ENCODE measurements at regions of chr11 and their contacts with region 1.

Region 1: GRCh38 chr11:66371627-66372415 is at the start of gene SLC29A2:
- DNase-seq: peak; percentile 72 to 78 (median 72)
- H3K4me3 ChIP-seq: peak within 1 kb of the TSS; percentile 49 to 71
- H3K4me3 Mint-ChIP-seq: peak within 1 kb of the TSS; percentile 88 to 95 (median 92)
- H3K27ac ChIP-seq: peak within 1 kb of the TSS; percentile 61
- H3K27ac Mint-ChIP-seq: peak within 1 kb of the TSS; percentile 83 to 95 (median 94)
- H3K4me1 ChIP-seq: peaks cover 12% of the 10 kb centered on the region
- H3K4me1 Mint-ChIP-seq: peaks cover 5 to 17% (median 12%) of the 10 kb centered on the region in 4 donors
- H3K27me3 ChIP-seq: no peaks in the 10 kb centered on the region
- H3K27me3 Mint-ChIP-seq: no peaks in the 10 kb centered on the region
- total RNA-seq, gene SLC29A2: 15.0 to 15.5 TPM

Region 2: DNA sequence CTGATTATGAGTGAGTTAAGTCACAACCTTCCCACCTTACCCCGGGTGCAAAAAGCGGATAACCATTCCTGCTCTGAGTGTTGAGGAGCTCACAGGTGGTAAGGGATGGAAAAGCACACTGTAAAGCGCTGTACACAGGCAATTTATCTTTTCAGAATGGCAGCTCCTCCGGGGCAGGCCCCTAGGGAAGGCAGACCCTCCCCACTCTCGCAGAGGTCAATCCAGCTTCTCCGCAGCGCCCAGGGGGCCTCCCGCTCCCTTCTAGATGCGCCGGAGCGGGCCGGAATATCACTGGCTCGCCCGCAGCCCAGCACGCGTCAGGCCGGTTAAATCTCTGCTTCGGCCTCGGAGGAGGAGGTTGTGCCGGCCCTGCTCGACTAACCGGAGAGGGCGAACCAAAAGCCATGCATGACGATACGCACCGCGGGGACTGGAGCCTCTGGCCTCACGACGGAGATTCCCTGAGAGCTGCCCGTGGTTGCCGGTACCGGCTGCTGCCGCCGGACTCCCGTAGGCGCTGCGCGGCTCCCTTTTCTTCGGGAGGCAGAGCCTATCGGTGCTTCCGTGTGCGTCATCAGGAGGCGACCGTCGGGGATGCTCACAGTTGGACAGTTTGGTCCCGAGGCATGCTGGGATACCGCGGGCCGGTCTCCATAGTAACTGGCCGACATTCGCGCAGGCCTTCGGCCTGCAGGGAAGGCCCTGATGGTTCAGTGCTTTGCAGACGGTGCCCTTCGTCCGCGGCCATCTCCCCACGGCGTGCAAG is 27.1 kb before region 1 on chr11 and contains the start of gene BRMS1:
- CTCF ChIA-PET with region 1: interaction called, 3 read pairs
- POLR2A ChIA-PET with region 1: interaction called, 31 read pairs
- intact Hi-C with region 1: loop called (anchors 1 kb)
- DNase-seq: peak; percentile 92 to 99 (median 93)
- H3K4me3 ChIP-seq: peak within 1 kb of the TSS; percentile 79 to 99
- H3K4me3 Mint-ChIP-seq: peak within 1 kb of the TSS; percentile 90 to 99 (median 97)
- H3K27ac ChIP-seq: peak within 1 kb of the TSS; percentile 84
- H3K27ac Mint-ChIP-seq: peak within 1 kb of the TSS; percentile 95 to 99 (median 98)
- H3K4me1 ChIP-seq: peaks cover 45% of the 10 kb centered on the region
- H3K4me1 Mint-ChIP-seq: peaks cover 31 to 62% (median 41%) of the 10 kb centered on the region in 4 donors
- H3K27me3 ChIP-seq: no peaks in the 10 kb centered on the region
- H3K27me3 Mint-ChIP-seq: peaks cover 1 to 4% of the 10 kb centered on the region in 2 donors
- total RNA-seq, gene BRMS1: 49.8 to 50.8 TPM

Region 3: DNA sequence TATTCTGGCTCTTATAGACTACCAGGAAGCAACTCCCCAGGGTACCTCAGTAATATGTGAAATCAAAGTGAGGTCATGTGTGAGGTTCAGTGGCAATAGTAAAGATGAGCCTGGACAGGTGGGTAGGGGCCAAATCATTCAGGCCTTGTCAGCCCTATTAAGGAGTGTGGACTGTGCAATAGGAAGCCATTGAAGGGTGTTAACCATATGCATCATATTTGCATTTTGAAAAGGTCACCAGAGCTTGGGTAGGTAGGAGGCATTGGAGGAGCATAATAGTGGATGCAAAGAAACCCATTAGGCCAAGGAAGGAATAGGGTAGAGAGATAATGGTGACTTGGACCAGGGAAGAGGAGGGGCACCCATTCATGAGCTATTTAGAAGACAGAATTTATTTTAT is 75.2 kb after region 1 on chr11:
- CTCF ChIA-PET with region 1: no interaction called
- POLR2A ChIA-PET with region 1: no interaction called
- intact Hi-C with region 1: no loop called
- DNase-seq: no peak
- H3K4me3 ChIP-seq: no peak overlapping the region
- H3K4me3 Mint-ChIP-seq: no peak overlapping the region
- H3K27ac ChIP-seq: no peak overlapping the region
- H3K27ac Mint-ChIP-seq: no peak overlapping the region
- H3K4me1 ChIP-seq: no peaks in the 10 kb centered on the region
- H3K4me1 Mint-ChIP-seq: no peaks in the 10 kb centered on the region
- H3K27me3 ChIP-seq: no peaks in the 10 kb centered on the region
- H3K27me3 Mint-ChIP-seq: peaks cover 4 to 14% of the 10 kb centered on the region in 2 donors

Measured in CD4-positive, alpha-beta memory T cell (primary cell).